Naive thymus-derived CD4-positive, alpha-beta T cell (primary cell): ENCODE measurements at regions of chr20 and their contacts with region 1.

Region 1: GRCh38 chr20:52494244-52494643 is 302.7 kb upstream of the ZFP64 start:
- DNase-seq: peak in 8 of 9 donors; percentile 2 to 32 (median 18)
- ATAC-seq: peak; percentile 51
- H3K4me3 ChIP-seq: no peak overlapping the region
- H3K4me3 Mint-ChIP-seq: peak overlapping the region; percentile 17 to 89 (median 73)
- H3K27ac ChIP-seq: no peak overlapping the region
- H3K27ac Mint-ChIP-seq: peak overlapping the region in 4 of 9 donors; percentile 28 to 72 (median 65)
- H3K4me1 ChIP-seq: peaks cover 0 to 17% of the 10 kb centered on the region in 2 donors
- H3K4me1 Mint-ChIP-seq: peaks cover 9 to 23% (median 20%) of the 10 kb centered on the region in 7 donors
- H3K27me3 ChIP-seq: no peaks in the 10 kb centered on the region
- H3K27me3 Mint-ChIP-seq: peaks cover 0 to 11% (median 6%) of the 10 kb centered on the region in 5 donors

Region 2: DNA sequence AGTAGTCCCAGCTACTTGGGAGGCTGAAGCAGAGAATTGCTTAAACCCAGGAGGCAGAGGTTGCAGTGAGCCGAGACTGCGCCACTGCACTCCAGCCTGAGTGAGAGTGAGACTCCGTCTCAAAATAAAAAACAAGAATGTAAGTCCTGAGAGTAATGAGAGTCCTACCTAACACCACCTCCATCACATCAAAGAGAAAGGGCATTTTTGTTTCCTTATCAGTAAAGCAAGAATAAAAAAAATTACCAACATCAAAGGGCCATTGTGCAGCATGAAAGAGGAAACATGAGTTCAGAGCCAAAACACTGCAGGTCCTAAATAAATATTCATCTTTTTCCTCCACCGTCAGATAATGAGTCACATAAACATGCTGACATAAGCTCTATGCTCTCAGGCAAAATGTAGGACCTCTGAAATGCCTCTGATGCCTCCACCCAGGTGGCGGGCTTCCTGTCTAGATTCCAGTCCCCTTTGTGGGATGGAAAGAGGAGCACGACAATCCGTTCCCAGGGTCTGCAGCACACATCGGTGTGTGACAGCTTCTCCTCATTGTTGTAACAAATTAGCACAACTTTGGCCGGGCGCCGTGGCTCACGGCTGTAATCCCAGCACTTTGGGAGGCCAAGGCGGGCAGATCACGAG is 733.2 kb before region 1 on chr20:
- CTCF ChIA-PET with region 1: no interaction called
- POLR2A ChIA-PET with region 1: no interaction called
- intact Hi-C with region 1: no loop called
- DNase-seq: no peak
- ATAC-seq: no peak
- H3K4me3 ChIP-seq: no peak overlapping the region
- H3K4me3 Mint-ChIP-seq: no peak overlapping the region
- H3K27ac ChIP-seq: no peak overlapping the region
- H3K27ac Mint-ChIP-seq: no peak overlapping the region
- H3K4me1 ChIP-seq: no peaks in the 10 kb centered on the region
- H3K4me1 Mint-ChIP-seq: no peaks in the 10 kb centered on the region
- H3K27me3 ChIP-seq: no peaks in the 10 kb centered on the region
- H3K27me3 Mint-ChIP-seq: peaks cover 1 to 33% (median 9%) of the 10 kb centered on the region in 5 donors

Region 3: GRCh38 chr20:52441710-52442109 is 52.5 kb before region 1 on chr20:
- CTCF ChIA-PET with region 1: no interaction called
- POLR2A ChIA-PET with region 1: interaction called, 3 read pairs
- intact Hi-C with region 1: loop called in 1 of 2 experiments (anchors 5 kb)
- DNase-seq: no peak
- ATAC-seq: no peak
- H3K4me3 ChIP-seq: no peak overlapping the region
- H3K4me3 Mint-ChIP-seq: no peak overlapping the region
- H3K27ac ChIP-seq: no peak overlapping the region
- H3K27ac Mint-ChIP-seq: peak overlapping the region in 1 of 9 donors; percentile 26
- H3K4me1 ChIP-seq: no peaks in the 10 kb centered on the region
- H3K4me1 Mint-ChIP-seq: peaks cover 0 to 20% (median 0%) of the 10 kb centered on the region in 7 donors
- H3K27me3 ChIP-seq: no peaks in the 10 kb centered on the region
- H3K27me3 Mint-ChIP-seq: peaks cover 0 to 3% (median 0%) of the 10 kb centered on the region in 5 donors

Region 4: GRCh38 chr20:52470561-52470960 is 23.7 kb before region 1 on chr20:
- CTCF ChIA-PET with region 1: no interaction called
- POLR2A ChIA-PET with region 1: no interaction called
- intact Hi-C with region 1: no loop called
- DNase-seq: no peak
- ATAC-seq: no peak
- H3K4me3 ChIP-seq: no peak overlapping the region
- H3K4me3 Mint-ChIP-seq: no peak overlapping the region
- H3K27ac ChIP-seq: no peak overlapping the region
- H3K27ac Mint-ChIP-seq: no peak overlapping the region
- H3K4me1 ChIP-seq: no peaks in the 10 kb centered on the region
- H3K4me1 Mint-ChIP-seq: peaks cover 0 to 12% (median 0%) of the 10 kb centered on the region in 7 donors
- H3K27me3 ChIP-seq: no peaks in the 10 kb centered on the region
- H3K27me3 Mint-ChIP-seq: no peaks in the 10 kb centered on the region

Region 5: GRCh38 chr20:52518735-52519134 is 24.5 kb after region 1 on chr20:
- CTCF ChIA-PET with region 1: no interaction called
- POLR2A ChIA-PET with region 1: interaction called, 3 read pairs
- intact Hi-C with region 1: loop called in 1 of 2 experiments (anchors 2 kb)
- DNase-seq: no peak
- ATAC-seq: no peak
- H3K4me3 ChIP-seq: no peak overlapping the region
- H3K4me3 Mint-ChIP-seq: no peak overlapping the region
- H3K27ac ChIP-seq: no peak overlapping the region
- H3K27ac Mint-ChIP-seq: no peak overlapping the region
- H3K4me1 ChIP-seq: no peaks in the 10 kb centered on the region
- H3K4me1 Mint-ChIP-seq: peaks cover 0 to 5% (median 2%) of the 10 kb centered on the region in 7 donors
- H3K27me3 ChIP-seq: no peaks in the 10 kb centered on the region
- H3K27me3 Mint-ChIP-seq: peaks cover 0 to 3% (median 0%) of the 10 kb centered on the region in 5 donors